ENCODE measurements at regions of chr12 and their contacts with region 1.

Region 1: DNA sequence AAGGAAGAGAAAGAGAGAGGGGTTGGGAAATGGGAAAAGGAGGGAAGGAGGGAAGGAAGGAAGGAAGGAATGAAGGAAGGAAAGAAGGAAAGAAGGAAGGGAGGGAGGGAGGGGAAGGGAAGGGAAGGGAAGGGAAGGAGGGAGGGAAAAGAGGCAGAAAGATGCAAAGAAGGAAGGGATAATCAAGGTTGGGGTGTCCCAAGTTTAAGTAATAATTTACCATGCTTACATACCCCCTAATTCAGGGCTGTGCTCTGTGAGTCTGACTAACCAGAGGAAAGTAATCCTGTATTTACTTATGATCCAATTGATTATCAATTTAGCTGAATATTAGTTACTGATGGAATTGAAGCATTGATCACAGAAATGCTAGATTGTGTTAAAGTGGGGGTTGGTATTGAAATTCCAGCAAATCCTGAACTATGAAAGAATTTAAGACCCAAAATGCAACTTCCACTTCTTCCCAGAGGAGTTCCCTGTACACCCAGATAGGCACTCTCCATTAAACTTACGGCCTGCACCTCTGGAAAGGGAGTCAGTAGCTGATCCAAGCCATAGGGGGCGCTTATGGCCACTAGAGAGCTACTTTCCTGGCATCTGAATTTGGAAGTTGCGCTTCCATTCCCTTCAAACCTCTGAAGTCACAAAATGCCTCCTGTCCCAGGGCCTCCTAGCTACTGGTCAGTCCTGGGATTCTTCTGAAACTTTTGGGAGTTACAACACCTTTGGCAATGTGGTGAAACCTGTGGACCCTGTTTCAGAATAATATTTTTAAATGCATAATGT is 162.7 kb upstream of the PWP1 start:
- DNase-seq: peak; percentile 23 to 68
- H3K4me3 ChIP-seq: no peak overlapping the region
- H3K27ac ChIP-seq: no peak overlapping the region
- H3K4me1 ChIP-seq: no peaks in the 10 kb centered on the region
- H3K27me3 ChIP-seq: no peaks in the 10 kb centered on the region
- CTCF ChIP-seq: peak; percentile 60 to 87 (median 77)
- EP300 ChIP-seq: no peak
- POLR2A ChIP-seq: no peak
- RAD21 ChIP-seq: peak; percentile 66 to 73

Region 2: GRCh38 chr12:107533218-107533617 is 10.3 kb after region 1 on chr12:
- CTCF ChIA-PET with region 1: interaction called, 17 read pairs
- POLR2A ChIA-PET with region 1: no interaction called
- DNase-seq: no peak
- H3K4me3 ChIP-seq: no peak overlapping the region
- H3K27ac ChIP-seq: no peak overlapping the region
- H3K4me1 ChIP-seq: no peaks in the 10 kb centered on the region
- H3K27me3 ChIP-seq: no peaks in the 10 kb centered on the region
- CTCF ChIP-seq: no peak
- EP300 ChIP-seq: no peak
- POLR2A ChIP-seq: no peak
- RAD21 ChIP-seq: no peak

Region 3: DNA sequence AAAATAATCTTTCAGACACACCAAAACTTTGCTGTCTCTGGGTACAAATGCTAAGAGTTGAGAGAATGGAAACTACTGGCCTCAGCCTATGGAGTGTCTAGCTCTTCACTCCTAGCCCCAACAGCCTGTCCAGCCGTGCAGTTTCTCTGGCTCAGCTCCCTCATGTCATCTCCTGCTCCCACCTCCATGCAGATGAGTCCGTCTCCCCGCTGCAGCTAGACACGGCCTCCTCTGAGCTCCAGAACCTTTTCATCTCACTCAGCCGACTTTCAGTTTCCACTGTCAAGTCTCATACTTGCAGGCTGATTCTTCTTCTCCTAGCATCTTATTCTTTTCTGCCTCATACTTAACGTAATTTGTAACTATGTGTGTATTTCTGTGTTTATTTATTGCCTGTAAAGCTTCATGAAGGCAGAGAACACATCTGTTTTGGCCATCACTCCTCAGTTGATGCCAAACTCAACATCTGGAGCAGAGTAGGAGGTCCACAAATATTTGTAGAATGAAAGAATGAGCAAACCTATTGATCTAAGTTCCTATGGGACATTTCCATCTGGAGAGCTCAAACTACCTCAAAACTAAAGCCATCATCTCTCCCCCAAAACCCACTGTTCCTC is 23.0 kb after region 1 on chr12:
- CTCF ChIA-PET with region 1: interaction called, 12 read pairs
- POLR2A ChIA-PET with region 1: no interaction called
- DNase-seq: no peak
- H3K4me3 ChIP-seq: no peak overlapping the region
- H3K27ac ChIP-seq: no peak overlapping the region
- H3K4me1 ChIP-seq: no peaks in the 10 kb centered on the region
- H3K27me3 ChIP-seq: no peaks in the 10 kb centered on the region
- CTCF ChIP-seq: no peak
- EP300 ChIP-seq: no peak
- POLR2A ChIP-seq: no peak
- RAD21 ChIP-seq: no peak

Region 4: DNA sequence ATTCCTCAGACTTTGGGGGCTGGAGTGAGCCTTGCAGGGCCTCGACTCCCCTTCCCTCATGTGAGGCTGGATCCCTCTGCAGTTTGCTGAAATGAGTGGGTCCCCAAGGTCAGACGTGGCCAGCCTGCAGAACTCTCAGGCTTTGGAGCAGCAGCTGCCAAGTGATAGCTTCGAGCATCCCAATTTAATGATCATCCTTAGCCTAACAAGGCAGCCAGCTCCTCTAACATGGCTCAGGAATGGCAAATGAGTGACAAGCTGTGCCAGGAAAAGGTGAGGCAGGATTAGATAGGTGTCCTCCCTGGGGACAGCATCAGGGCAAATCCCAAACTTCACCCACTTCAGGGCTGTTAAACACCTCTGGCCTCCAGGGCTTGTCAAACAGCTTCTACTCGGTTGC is 32.1 kb after region 1 on chr12:
- CTCF ChIA-PET with region 1: interaction called, 20 read pairs
- POLR2A ChIA-PET with region 1: no interaction called
- DNase-seq: no peak
- H3K4me3 ChIP-seq: no peak overlapping the region
- H3K27ac ChIP-seq: no peak overlapping the region
- H3K4me1 ChIP-seq: peaks cover 0 to under 1% (median 0%) of the 10 kb centered on the region in 4 experiments; a peak in 1 of 7 replicates
- H3K27me3 ChIP-seq: no peaks in the 10 kb centered on the region
- CTCF ChIP-seq: no peak
- EP300 ChIP-seq: no peak
- POLR2A ChIP-seq: no peak
- RAD21 ChIP-seq: no peak